ENCODE measurements at regions of chr3 and their contacts with region 1.

Region 1: DNA sequence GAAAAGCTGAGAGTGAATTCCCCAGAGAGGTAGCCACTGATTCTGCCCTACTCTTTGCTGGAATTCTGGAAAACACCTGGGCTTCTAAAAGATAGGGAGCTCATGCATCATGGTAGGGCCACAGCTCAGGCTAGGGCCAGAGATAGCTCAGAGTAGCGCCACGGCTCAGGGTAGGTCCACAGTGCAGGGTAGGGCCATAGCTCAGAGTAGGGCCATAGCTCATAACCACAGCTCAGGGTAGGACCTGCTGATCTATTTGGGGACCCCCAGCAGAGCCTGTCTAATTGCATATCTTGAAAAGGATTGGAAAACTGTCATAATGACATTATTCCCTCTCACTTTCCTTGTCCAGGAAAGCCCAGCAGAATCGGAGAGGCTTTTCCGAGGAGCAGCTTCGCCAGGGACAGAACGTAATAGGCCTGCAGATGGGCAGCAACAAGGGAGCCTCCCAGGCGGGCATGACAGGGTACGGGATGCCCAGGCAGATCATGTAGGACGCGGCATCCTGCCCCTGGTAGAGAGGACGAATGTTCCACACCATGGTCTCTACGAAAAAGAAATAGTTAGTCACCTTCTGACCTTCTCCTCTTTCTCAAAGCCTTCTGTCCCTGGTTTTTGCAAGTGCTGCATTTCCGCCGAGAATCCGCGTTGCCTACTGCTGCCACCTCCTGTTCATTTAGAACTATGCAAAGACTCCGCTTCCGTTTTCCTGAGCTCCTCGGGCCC is 14.5 kb downstream of the TAGLN3 start:
- DNase-seq: peak; percentile 41
- H3K4me3 Mint-ChIP-seq: no peak overlapping the region
- H3K27ac Mint-ChIP-seq: peak overlapping the region; percentile 67
- H3K4me1 Mint-ChIP-seq: peaks cover 24% of the 10 kb centered on the region
- H3K27me3 Mint-ChIP-seq: no peaks in the 10 kb centered on the region

Region 2: DNA sequence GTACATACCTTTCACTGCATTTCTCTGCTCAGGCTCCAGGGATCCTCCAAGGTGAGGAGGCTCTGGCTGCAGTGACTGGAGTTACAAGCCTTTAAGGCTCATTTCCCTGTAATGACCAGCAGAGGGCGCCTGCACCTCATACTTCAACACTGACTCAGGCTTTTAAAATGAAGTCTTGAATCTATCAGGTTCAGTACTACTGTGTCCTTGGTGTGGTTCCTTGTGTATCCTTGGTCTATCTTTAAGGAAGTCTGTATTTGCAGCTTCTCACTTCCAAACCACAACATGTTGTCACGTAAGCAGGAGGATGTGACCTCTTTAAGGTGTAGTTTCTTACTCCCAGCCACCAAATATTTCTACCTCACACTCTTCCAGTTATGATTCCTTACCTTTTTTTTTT is 295.6 kb before region 1 on chr3:
- intact Hi-C with region 1: loop called (anchors 1 kb)
- DNase-seq: peak; percentile 45
- H3K4me3 Mint-ChIP-seq: no peak overlapping the region
- H3K27ac Mint-ChIP-seq: no peak overlapping the region
- H3K4me1 Mint-ChIP-seq: peaks cover 1% of the 10 kb centered on the region
- H3K27me3 Mint-ChIP-seq: no peaks in the 10 kb centered on the region

Region 3: GRCh38 chr3:111967651-111968274 is 45.5 kb before region 1 on chr3:
- intact Hi-C with region 1: loop called (anchors 1 kb)
- DNase-seq: peak; percentile 67
- H3K4me3 Mint-ChIP-seq: no peak overlapping the region
- H3K27ac Mint-ChIP-seq: no peak overlapping the region
- H3K4me1 Mint-ChIP-seq: peaks cover 17% of the 10 kb centered on the region
- H3K27me3 Mint-ChIP-seq: peaks cover 6% of the 10 kb centered on the region

Region 4: GRCh38 chr3:111978493-111979433 is 34.5 kb before region 1 on chr3 and contains the start of gene ABHD10:
- intact Hi-C with region 1: loop called (anchors 2 kb)
- DNase-seq: peak; percentile 94
- H3K4me3 Mint-ChIP-seq: peak within 1 kb of the TSS; percentile 78
- H3K27ac Mint-ChIP-seq: peak within 1 kb of the TSS; percentile 77
- H3K4me1 Mint-ChIP-seq: peaks cover 39% of the 10 kb centered on the region
- H3K27me3 Mint-ChIP-seq: peaks cover 19% of the 10 kb centered on the region
- total RNA-seq, gene ABHD10: 46.3 and 46.9 TPM in 2 replicates

Region 5: GRCh38 chr3:111989061-111989678 is 24.1 kb before region 1 on chr3:
- intact Hi-C with region 1: loop called (anchors 1 kb)
- DNase-seq: no peak
- H3K4me3 Mint-ChIP-seq: no peak overlapping the region
- H3K27ac Mint-ChIP-seq: no peak overlapping the region
- H3K4me1 Mint-ChIP-seq: peaks cover 33% of the 10 kb centered on the region
- H3K27me3 Mint-ChIP-seq: no peaks in the 10 kb centered on the region

Region 6: GRCh38 chr3:112002096-112002971 is 10.9 kb before region 1 on chr3:
- intact Hi-C with region 1: loop called (anchors 1 kb)
- DNase-seq: no peak
- H3K4me3 Mint-ChIP-seq: peak overlapping the region; percentile 37
- H3K27ac Mint-ChIP-seq: peak overlapping the region; percentile 80
- H3K4me1 Mint-ChIP-seq: peaks cover 48% of the 10 kb centered on the region
- H3K27me3 Mint-ChIP-seq: no peaks in the 10 kb centered on the region

Region 7: DNA sequence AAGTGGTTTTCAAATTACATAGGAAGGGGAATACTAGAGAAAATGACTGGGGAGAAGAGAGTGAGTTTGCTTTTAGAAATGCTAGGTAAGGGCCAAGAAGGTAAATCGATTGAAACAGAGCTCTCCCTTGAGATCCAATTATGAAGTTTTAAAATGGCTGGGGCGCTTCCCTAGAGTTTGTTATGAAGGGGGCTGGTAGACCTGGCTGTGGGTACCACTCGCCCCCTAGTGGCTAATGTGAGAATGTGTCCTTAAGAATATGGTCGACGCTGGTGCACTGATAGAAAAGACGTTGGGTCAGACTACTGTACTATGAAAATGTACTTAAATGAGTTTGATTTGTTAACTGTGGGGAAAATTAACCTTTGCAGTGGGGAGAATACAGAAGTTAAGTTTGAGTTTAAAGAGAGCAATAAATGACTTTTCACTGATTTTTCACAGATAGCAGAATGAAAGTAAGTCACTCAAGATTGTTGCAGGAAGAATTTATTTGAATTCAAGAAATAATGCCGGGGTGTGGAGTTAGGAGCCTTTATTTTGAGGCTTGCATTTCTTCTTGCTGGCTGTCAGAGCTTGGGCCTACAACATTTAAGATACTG is 30.5 kb after region 1 on chr3:
- intact Hi-C with region 1: loop called (anchors 2 kb)
- DNase-seq: peak; percentile 37
- H3K4me3 Mint-ChIP-seq: no peak overlapping the region
- H3K27ac Mint-ChIP-seq: no peak overlapping the region
- H3K4me1 Mint-ChIP-seq: peaks cover 5% of the 10 kb centered on the region
- H3K27me3 Mint-ChIP-seq: peaks cover 2% of the 10 kb centered on the region